GM12878 (cell line): ENCODE measurements at regions of chr5 and their contacts with region 1.

Region 1: GRCh38 chr5:132426525-132427138 is 57.1 kb downstream of the SLC22A5 start:
- DNase-seq: no peak
- ATAC-seq: peak; percentile 62
- H3K4me3 ChIP-seq: peak overlapping the region; percentile 49
- H3K27ac ChIP-seq: peak overlapping the region; percentile 94
- H3K4me1 ChIP-seq: peaks cover 90% of the 10 kb centered on the region
- H3K27me3 ChIP-seq: no peaks in the 10 kb centered on the region
- CTCF ChIP-seq: peak; percentile 47 to 56 (median 52)
- EP300 ChIP-seq: peak; percentile 17 to 67; a peak in 3 of 4 replicates
- POLR2A ChIP-seq: peak; percentile 88
- RAD21 ChIP-seq: peak; percentile 42; the same call in 1 of the 2 replicates

Region 2: DNA sequence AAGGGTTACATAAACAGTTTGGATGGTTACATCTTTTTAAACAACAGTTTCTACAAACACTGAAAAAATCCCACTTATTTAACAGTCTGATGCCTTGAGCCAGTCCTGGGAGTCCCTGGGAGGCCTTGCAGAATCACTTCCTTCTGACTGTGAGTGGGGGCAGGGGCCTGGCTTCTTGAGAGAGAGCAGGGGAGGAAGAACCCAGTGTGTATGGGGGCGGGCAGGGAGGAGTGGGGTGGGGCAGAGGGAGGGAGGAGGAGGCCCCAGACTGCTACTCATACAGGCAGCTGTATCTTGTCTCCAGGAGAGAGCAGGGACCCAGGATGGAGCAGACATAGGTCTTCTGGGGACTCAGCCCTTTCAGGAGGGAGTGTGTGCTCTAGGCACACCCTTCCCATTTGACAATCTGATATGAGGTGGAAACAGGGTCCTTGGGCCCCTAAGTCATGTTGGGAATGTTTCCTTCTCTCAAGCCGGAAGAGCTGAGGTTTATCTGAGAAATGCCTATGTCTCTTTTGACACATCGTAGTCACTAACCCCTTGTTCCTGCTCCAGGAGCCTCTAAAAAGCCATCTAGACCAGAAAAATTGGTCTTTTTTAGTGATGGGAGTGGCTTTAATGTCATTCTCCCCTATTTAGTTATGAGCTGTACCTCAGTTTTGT is 11.1 kb after region 1 on chr5:
- CTCF ChIA-PET with region 1: interaction called, 47 read pairs
- POLR2A ChIA-PET with region 1: interaction called, 25 read pairs
- RAD21 ChIA-PET with region 1: interaction called, 52 read pairs
- SMC1A ChIA-PET with region 1: interaction called, 88 read pairs
- in situ Hi-C with region 1: no loop called
- intact Hi-C with region 1: no loop called
- DNase-seq: no peak
- ATAC-seq: peak; percentile 91
- H3K4me3 ChIP-seq: peak overlapping the region; percentile 18; the same call in 1 of the 2 replicates
- H3K27ac ChIP-seq: peak overlapping the region; percentile 62
- H3K4me1 ChIP-seq: peaks cover 28% of the 10 kb centered on the region
- H3K27me3 ChIP-seq: no peaks in the 10 kb centered on the region
- CTCF ChIP-seq: no peak
- EP300 ChIP-seq: no peak
- POLR2A ChIP-seq: peak; percentile 36; the same call in 1 of the 2 replicates
- RAD21 ChIP-seq: peak; percentile 19; the same call in 1 of the 2 replicates

Region 3: GRCh38 chr5:132887283-132887682 is 460.7 kb after region 1 on chr5:
- CTCF ChIA-PET with region 1: no interaction called
- POLR2A ChIA-PET with region 1: no interaction called
- RAD21 ChIA-PET with region 1: no interaction called
- SMC1A ChIA-PET with region 1: no interaction called
- in situ Hi-C with region 1: no loop called
- intact Hi-C with region 1: no loop called
- DNase-seq: no peak
- ATAC-seq: no peak
- H3K4me3 ChIP-seq: no peak overlapping the region
- H3K27ac ChIP-seq: no peak overlapping the region
- H3K4me1 ChIP-seq: no peaks in the 10 kb centered on the region
- H3K27me3 ChIP-seq: no peaks in the 10 kb centered on the region
- CTCF ChIP-seq: no peak
- EP300 ChIP-seq: no peak
- POLR2A ChIP-seq: no peak
- RAD21 ChIP-seq: no peak